Tibial artery (tissue), 4 donors: ENCODE measurements at regions of chr13 and their contacts with region 1.

Region 1: DNA sequence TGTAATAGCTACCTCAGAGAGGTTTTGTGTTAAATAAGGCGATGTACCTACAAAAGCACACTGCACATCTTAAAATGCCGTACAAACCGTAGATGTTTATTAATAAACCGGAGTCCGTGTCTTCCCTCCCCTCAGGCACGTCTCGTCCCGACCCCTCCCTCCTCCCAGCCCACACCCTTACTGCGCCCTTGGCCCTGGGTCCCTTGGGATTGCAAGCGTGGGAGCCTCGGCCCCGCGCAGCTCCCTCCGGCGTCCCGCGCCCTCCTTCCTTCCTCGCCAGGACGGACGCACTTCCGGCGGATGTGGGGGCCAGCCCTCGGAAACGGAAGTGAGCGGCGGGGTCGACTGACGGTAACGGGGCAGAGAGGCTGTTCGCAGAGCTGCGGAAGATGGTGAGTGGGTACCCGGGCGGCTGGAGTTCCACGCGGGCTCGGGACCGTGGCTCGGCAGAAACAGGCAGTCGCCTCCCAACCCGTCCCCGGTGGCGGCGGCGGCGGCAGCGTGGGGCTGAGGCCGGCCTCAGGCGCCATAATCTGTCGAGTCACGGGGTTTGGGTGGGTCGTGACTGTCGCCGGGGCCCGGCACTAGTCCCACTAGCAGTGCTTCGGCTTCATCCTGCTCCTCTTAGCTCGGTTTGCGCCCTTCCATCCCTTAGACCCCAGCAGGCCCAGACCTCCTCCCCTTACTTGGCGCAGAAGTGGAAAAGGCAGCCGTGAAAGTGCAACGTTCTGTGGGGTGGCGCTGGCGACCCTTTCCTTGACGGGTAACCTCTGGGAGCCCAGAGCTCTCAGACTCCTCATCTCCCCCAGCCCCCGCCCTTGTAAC is at the start of gene POMP:
- DNase-seq: peak; percentile 92 to 96
- H3K4me3 ChIP-seq: peak within 1 kb of the TSS; percentile 86 to 98
- H3K27ac ChIP-seq: peak within 1 kb of the TSS; percentile 88 to 95
- H3K4me1 ChIP-seq: peaks cover 0 to 41% (median 32%) of the 10 kb centered on the region in 4 donors
- H3K27me3 ChIP-seq: no peaks in the 10 kb centered on the region
- CTCF ChIP-seq: no peak

Region 2: DNA sequence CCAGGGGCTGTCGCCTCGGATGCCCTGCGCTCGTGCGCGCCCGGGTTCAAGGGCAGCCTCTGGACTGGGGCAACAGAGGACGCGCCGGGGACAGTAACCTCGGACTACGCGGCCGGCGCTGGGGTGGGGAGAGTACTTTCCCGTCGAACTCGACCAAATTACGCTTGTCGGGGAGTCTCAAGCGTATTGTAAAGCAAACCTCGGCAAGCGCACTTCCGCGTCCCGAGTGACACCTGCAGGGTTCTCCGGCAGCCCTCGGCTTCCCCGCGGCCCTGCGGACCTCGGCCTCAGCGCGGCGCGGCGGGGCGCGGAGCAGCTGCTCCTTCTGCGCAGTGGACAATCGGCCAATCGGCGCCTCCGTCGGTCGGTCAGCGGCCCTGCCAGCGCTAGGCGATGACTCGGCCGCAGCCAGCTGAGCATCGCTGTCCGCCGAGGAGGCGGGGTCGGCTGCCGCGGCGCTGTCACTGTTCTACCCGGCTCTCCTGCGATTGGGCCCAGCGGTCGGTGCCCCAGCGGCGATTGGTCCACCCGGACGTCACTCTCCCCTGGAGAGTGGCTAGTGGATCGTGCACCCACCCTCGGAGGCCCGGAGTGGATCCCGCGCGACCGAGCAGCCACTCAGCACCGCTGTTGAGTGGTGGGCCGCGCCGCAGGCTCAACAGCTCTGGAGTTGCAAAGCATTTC is 59.7 kb after region 1 on chr13 and contains the start of gene SLC46A3:
- intact Hi-C with region 1: loop called (anchors 5 kb)
- DNase-seq: peak; percentile 98 to 100
- H3K4me3 ChIP-seq: peak within 1 kb of the TSS; percentile 71 to 92
- H3K27ac ChIP-seq: peak within 1 kb of the TSS; percentile 96 to 97
- H3K4me1 ChIP-seq: peaks cover 0 to 25% (median 6%) of the 10 kb centered on the region in 4 donors
- H3K27me3 ChIP-seq: no peaks in the 10 kb centered on the region
- CTCF ChIP-seq: peak; percentile 12 to 13

Region 3: DNA sequence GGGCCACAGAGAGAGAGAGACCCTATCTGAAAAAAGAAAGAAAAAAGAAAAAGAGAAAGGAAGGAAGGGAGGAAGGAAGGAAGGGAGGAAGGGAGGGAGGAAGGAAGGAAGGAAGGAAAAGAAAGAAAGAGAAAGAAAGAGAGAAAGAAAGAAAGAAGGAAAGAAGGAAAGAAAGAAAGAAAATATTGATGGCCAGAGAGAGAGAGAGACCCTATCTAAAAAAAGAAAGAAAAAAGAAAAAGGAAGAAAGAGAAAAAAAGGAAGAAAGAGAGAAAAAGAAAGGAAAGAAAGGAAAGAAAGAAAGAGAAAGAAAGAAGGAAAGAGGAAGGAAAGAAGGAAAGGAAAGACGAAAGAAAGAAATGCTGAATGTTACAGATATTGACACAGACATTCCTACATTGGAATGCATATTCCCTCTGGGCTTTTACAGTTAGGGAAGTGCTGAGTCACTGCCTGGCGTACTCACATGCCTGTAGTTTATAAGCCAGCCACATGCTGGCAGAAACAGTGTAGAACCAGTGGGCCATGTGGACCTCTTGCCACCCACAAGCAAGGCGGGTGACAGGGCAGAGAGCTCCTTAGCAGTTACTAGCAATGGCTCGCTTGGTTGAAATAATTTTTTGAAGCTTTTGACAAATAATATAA is 94.4 kb after region 1 on chr13:
- intact Hi-C with region 1: no loop called
- DNase-seq: peak; percentile 58 to 82
- H3K4me3 ChIP-seq: no peak overlapping the region
- H3K27ac ChIP-seq: peak overlapping the region in 1 of 2 donors; percentile 37
- H3K4me1 ChIP-seq: peaks cover 0 to 21% (median 10%) of the 10 kb centered on the region in 4 donors
- H3K27me3 ChIP-seq: no peaks in the 10 kb centered on the region
- CTCF ChIP-seq: peak; percentile 12 to 13